Lower leg skin (tissue), 4 donors: ENCODE measurements at regions of chr22 and their contacts with region 1.

Region 1: GRCh38 chr22:37807410-37808293 is at the start of gene GCAT:
- DNase-seq: peak; percentile 96 to 99
- H3K4me3 ChIP-seq: peak within 1 kb of the TSS; percentile 63
- CTCF ChIP-seq: no peak
- POLR2A ChIP-seq: no peak
- total RNA-seq, gene GCAT: 12.5 to 20.4 (median 16.2) TPM

Region 2: DNA sequence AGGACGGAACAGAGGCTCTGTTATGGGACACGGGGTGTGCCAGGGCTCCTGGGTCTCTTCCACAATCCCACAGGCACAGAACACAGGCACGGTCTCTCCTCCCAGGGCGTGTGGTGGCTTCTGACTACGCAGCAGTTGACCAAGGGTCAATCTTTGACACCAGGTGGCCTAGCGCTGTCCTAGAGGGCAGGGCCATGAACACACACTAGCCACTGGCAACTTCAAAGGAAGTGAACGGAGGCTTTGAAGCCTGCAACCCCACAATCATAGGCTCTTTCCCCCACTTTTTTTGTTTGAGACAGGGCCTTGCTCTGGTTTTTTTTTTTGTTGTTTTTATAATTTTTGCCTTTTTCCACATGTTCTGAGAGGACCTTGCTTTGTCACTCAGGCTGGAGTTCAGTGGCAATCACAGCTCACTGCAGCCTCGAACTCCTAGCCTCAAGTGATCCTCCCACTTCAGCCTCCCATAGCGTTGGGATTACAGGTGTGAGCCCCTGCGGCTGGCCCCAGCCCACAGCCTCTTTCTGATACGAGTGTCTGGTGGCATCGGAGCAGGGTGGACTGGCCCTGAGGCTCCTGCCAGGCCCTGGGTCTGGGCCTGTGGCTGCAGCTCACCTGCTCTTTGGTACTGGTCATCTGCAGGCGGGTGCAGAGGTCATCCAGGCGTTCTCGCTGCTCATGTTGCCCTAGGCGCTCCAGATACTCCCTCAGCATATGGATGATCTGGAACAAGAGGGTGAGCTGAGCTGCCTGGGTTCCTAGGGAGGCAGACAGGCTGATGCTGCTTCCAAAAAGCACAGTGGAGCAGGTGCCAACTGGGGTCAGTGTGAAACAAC is 24.6 kb after region 1 on chr22:
- intact Hi-C with region 1: no loop called
- DNase-seq: no peak
- H3K4me3 ChIP-seq: no peak overlapping the region
- CTCF ChIP-seq: no peak
- POLR2A ChIP-seq: no peak

Region 3: GRCh38 chr22:37910890-37911743 is 103.5 kb after region 1 on chr22:
- intact Hi-C with region 1: no loop called
- DNase-seq: no peak
- H3K4me3 ChIP-seq: no peak overlapping the region
- CTCF ChIP-seq: no peak
- POLR2A ChIP-seq: no peak

Region 4: GRCh38 chr22:38135133-38135751 is 327.6 kb after region 1 on chr22:
- intact Hi-C with region 1: loop called (anchors 5 kb)
- DNase-seq: peak in 1 of 2 donors; percentile 82
- H3K4me3 ChIP-seq: no peak overlapping the region
- CTCF ChIP-seq: no peak
- POLR2A ChIP-seq: no peak

Region 5: GRCh38 chr22:38187413-38188212 is 380.0 kb after region 1 on chr22:
- intact Hi-C with region 1: no loop called
- DNase-seq: no peak
- H3K4me3 ChIP-seq: no peak overlapping the region
- CTCF ChIP-seq: no peak
- POLR2A ChIP-seq: no peak